GM12878 (cell line): ENCODE measurements at regions of chr7 and their contacts with region 1.

Region 1: GRCh38 chr7:7182156-7183060 is at the start of gene C1GALT1:
- DNase-seq: peak; percentile 92
- ATAC-seq: peak; percentile 90
- H3K4me3 ChIP-seq: peak within 1 kb of the TSS; percentile 95
- H3K27ac ChIP-seq: peak within 1 kb of the TSS; percentile 96
- H3K4me1 ChIP-seq: peaks cover 9% of the 10 kb centered on the region
- H3K27me3 ChIP-seq: no peaks in the 10 kb centered on the region
- CTCF ChIP-seq: peak; percentile 44 to 55 (median 48)
- EP300 ChIP-seq: 0 out of 4 replicates have a peak, but pooled peaks of 1 of the 2 experiments have one; percentile 5
- POLR2A ChIP-seq: peak; percentile 81
- RAD21 ChIP-seq: peak; percentile 57
- polyA plus RNA-seq, gene C1GALT1: 1.6 to 2.7 TPM

Region 2: GRCh38 chr7:6934986-6935385 is 247.4 kb before region 1 on chr7:
- CTCF ChIA-PET with region 1: no interaction called
- POLR2A ChIA-PET with region 1: no interaction called
- RAD21 ChIA-PET with region 1: no interaction called
- SMC1A ChIA-PET with region 1: no interaction called
- in situ Hi-C with region 1: no loop called
- intact Hi-C with region 1: no loop called
- DNase-seq: no peak
- ATAC-seq: no peak
- H3K4me3 ChIP-seq: no peak overlapping the region
- H3K27ac ChIP-seq: no peak overlapping the region
- H3K4me1 ChIP-seq: no peaks in the 10 kb centered on the region
- H3K27me3 ChIP-seq: no peaks in the 10 kb centered on the region
- CTCF ChIP-seq: no peak
- EP300 ChIP-seq: no peak
- POLR2A ChIP-seq: no peak
- RAD21 ChIP-seq: no peak

Region 3: DNA sequence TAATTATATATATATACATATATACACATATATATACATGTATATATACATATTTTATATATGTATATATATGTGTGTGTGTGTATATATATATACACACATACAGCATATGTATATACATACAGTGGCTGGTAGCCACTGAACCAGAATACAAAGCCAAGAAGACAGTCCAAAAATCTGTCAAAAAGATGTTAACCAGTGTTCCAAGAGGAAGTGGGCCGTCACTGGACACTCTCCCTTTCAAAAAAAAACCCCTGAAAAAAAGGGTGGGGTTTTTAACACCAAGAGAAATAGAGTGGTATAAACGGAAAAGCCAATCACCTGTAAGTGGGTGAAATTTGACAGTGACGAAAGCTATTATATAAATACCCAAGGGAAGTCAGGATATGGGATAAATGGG is 31.1 kb before region 1 on chr7:
- CTCF ChIA-PET with region 1: no interaction called
- POLR2A ChIA-PET with region 1: no interaction called
- RAD21 ChIA-PET with region 1: no interaction called
- SMC1A ChIA-PET with region 1: no interaction called
- in situ Hi-C with region 1: no loop called
- intact Hi-C with region 1: no loop called
- DNase-seq: no peak
- ATAC-seq: no peak
- H3K4me3 ChIP-seq: no peak overlapping the region
- H3K27ac ChIP-seq: no peak overlapping the region
- H3K4me1 ChIP-seq: no peaks in the 10 kb centered on the region
- H3K27me3 ChIP-seq: no peaks in the 10 kb centered on the region
- CTCF ChIP-seq: no peak
- EP300 ChIP-seq: no peak
- POLR2A ChIP-seq: no peak
- RAD21 ChIP-seq: no peak

Region 4: GRCh38 chr7:7201578-7202374 is 19.4 kb after region 1 on chr7:
- CTCF ChIA-PET with region 1: interaction called, 7 read pairs
- POLR2A ChIA-PET with region 1: interaction called, 4 read pairs
- RAD21 ChIA-PET with region 1: interaction called, 6 read pairs
- SMC1A ChIA-PET with region 1: interaction called, 10 read pairs
- in situ Hi-C with region 1: no loop called
- intact Hi-C with region 1: no loop called
- DNase-seq: peak; percentile 48
- ATAC-seq: peak; percentile 99
- H3K4me3 ChIP-seq: peak overlapping the region; percentile 59
- H3K27ac ChIP-seq: peak overlapping the region; percentile 54; the same call in 1 of the 2 replicates
- H3K4me1 ChIP-seq: peaks cover 16% of the 10 kb centered on the region
- H3K27me3 ChIP-seq: no peaks in the 10 kb centered on the region
- CTCF ChIP-seq: no peak
- EP300 ChIP-seq: no peak
- POLR2A ChIP-seq: no peak
- RAD21 ChIP-seq: 0 out of 2 replicates have a peak, but pooled peaks have one; percentile 7

Region 5: GRCh38 chr7:7321720-7322128 is 139.3 kb after region 1 on chr7:
- CTCF ChIA-PET with region 1: interaction called, 4 read pairs
- POLR2A ChIA-PET with region 1: interaction called, 5 read pairs
- RAD21 ChIA-PET with region 1: interaction called, 9 read pairs
- SMC1A ChIA-PET with region 1: interaction called, 4 read pairs
- in situ Hi-C with region 1: no loop called
- intact Hi-C with region 1: loop called (anchors 5 kb)
- DNase-seq: peak; percentile 68
- ATAC-seq: peak; percentile 94
- H3K4me3 ChIP-seq: no peak overlapping the region
- H3K27ac ChIP-seq: no peak overlapping the region
- H3K4me1 ChIP-seq: peaks cover 22% of the 10 kb centered on the region
- H3K27me3 ChIP-seq: no peaks in the 10 kb centered on the region; a peak in 1 of 4 replicates
- CTCF ChIP-seq: no peak
- EP300 ChIP-seq: no peak
- POLR2A ChIP-seq: no peak
- RAD21 ChIP-seq: no peak

Region 6: GRCh38 chr7:7424151-7424873 is 241.9 kb after region 1 on chr7:
- CTCF ChIA-PET with region 1: interaction called, 10 read pairs
- POLR2A ChIA-PET with region 1: interaction called, 4 read pairs
- RAD21 ChIA-PET with region 1: interaction called, 8 read pairs
- SMC1A ChIA-PET with region 1: interaction called, 21 read pairs
- in situ Hi-C with region 1: no loop called
- intact Hi-C with region 1: loop called (anchors 2 kb)
- DNase-seq: peak; percentile 37
- ATAC-seq: peak; percentile 92
- H3K4me3 ChIP-seq: peak overlapping the region; percentile 41
- H3K27ac ChIP-seq: no peak overlapping the region
- H3K4me1 ChIP-seq: no peaks in the 10 kb centered on the region
- H3K27me3 ChIP-seq: no peaks in the 10 kb centered on the region
- CTCF ChIP-seq: peak; percentile 66 to 75 (median 66)
- EP300 ChIP-seq: no peak
- POLR2A ChIP-seq: no peak
- RAD21 ChIP-seq: peak; percentile 76

Region 7: DNA sequence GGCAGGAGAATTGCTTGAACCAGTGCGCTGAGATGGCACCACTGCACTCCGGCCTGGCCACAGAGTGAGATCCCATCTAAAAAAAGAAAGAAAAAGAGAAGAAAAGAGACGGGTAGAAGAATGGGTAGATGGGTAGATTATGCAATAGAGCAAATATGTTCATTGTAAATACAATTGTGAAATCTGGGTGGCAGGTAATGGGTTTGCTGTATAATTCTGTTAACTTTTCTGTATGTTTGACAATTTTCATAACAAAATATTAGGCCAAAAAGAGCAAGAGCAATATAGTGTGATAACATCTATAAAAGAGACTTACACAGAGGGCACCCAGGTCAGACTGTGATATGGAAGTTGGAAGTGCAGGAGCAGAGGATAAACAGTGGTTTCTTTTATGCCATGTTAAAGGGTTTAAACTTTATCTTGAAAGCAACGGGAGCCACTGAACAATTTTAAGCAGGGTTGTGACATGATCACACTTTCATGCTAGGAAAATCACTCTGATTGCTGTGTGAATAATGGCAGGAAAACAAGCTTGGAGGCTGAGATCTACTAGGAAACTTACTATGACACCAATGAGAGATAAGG is 359.9 kb after region 1 on chr7:
- CTCF ChIA-PET with region 1: interaction called, 10 read pairs
- POLR2A ChIA-PET with region 1: no interaction called
- RAD21 ChIA-PET with region 1: interaction called, 4 read pairs
- SMC1A ChIA-PET with region 1: interaction called, 5 read pairs
- in situ Hi-C with region 1: no loop called
- intact Hi-C with region 1: loop called (anchors 10 kb)
- DNase-seq: no peak
- ATAC-seq: no peak
- H3K4me3 ChIP-seq: no peak overlapping the region
- H3K27ac ChIP-seq: no peak overlapping the region
- H3K4me1 ChIP-seq: no peaks in the 10 kb centered on the region
- H3K27me3 ChIP-seq: no peaks in the 10 kb centered on the region
- CTCF ChIP-seq: no peak
- EP300 ChIP-seq: no peak
- POLR2A ChIP-seq: no peak
- RAD21 ChIP-seq: no peak

Region 8: DNA sequence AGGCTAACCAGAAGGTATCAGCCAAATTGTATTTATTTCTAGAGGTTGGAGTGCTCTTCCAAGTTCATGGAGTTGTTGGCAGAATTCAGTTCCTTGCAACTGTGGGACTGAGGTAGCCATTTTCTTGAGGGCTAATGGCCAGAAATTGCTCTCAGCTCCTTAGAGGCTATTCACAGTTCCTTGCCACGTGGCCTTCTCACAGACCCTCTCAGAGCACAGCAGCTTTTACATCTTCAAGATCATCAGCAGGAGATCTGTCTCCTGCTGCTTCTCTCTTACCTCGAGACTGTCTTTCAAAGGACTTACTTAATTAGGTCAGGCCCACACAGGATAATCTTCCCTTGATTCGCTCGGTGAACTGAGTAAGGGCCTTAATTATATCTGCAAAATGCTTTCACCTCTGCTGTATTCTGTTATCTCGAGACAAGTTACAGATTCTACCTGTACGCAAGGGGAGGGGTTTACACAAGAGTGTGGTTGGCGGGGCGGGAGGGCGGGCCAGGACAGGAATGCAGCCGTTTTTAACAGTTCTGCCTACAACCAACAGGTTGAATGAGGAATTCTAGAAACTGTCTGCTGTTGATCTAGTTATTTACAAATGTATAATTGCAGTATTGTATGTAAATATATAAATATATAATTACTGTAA is 399.2 kb after region 1 on chr7:
- CTCF ChIA-PET with region 1: no interaction called
- POLR2A ChIA-PET with region 1: no interaction called
- RAD21 ChIA-PET with region 1: no interaction called
- SMC1A ChIA-PET with region 1: no interaction called
- in situ Hi-C with region 1: no loop called
- intact Hi-C with region 1: no loop called
- DNase-seq: no peak
- ATAC-seq: no peak
- H3K4me3 ChIP-seq: no peak overlapping the region
- H3K27ac ChIP-seq: no peak overlapping the region
- H3K4me1 ChIP-seq: peaks cover 9% of the 10 kb centered on the region
- H3K27me3 ChIP-seq: no peaks in the 10 kb centered on the region
- CTCF ChIP-seq: no peak
- EP300 ChIP-seq: no peak
- POLR2A ChIP-seq: no peak
- RAD21 ChIP-seq: no peak